ENCODE measurements at regions of chr2 and their contacts with region 1.

Region 1: DNA sequence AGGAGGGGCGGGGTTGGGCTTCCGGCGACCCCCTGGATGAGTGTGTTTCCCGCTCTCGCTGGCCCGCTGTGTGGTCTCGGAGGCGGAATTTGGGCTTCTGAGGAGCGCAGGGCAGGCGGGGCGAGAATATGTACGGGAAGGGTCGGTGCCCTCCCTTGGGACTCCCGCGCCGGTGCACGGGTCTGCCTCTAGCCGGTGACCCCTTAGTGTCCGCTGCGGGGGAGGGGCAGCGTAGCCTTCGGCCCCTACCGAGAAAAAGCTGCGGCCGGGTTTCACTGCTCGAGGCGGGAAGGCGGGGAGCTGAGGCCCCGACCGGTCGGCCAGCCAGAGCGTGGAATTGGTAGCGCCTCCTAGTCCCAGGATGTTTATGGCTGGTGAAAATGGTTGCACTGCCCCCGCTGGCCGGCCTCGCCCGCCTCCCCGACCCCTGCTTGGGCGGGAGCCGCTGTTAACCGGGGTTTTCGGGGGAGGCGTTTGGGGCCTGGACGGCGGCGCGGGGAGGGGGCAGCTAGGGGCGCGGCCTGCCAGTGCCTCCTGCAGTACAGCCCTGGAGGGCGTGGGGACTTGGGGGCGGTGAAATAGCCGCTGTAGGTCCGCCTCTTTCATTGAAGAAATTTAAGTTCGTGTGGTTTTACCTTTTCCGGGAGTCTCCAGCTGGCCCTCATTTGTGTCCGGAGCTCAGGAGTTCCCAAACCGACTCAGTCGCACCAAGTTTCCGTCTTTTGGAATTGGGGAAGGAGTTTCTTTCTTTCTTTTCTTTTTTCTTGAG is at the start of gene UGP2:
- DNase-seq: peak; percentile 93
- ATAC-seq: peak; percentile 70
- H3K4me3 Mint-ChIP-seq: peak within 1 kb of the TSS; percentile 100
- H3K27ac Mint-ChIP-seq: peak within 1 kb of the TSS; percentile 97
- H3K4me1 Mint-ChIP-seq: peaks cover 43% of the 10 kb centered on the region
- H3K27me3 Mint-ChIP-seq: no peaks in the 10 kb centered on the region
- CTCF ChIP-seq: no peak
- total RNA-seq, gene UGP2: 543 to 626 TPM (median 606 TPM) in 3 replicates

Region 2: DNA sequence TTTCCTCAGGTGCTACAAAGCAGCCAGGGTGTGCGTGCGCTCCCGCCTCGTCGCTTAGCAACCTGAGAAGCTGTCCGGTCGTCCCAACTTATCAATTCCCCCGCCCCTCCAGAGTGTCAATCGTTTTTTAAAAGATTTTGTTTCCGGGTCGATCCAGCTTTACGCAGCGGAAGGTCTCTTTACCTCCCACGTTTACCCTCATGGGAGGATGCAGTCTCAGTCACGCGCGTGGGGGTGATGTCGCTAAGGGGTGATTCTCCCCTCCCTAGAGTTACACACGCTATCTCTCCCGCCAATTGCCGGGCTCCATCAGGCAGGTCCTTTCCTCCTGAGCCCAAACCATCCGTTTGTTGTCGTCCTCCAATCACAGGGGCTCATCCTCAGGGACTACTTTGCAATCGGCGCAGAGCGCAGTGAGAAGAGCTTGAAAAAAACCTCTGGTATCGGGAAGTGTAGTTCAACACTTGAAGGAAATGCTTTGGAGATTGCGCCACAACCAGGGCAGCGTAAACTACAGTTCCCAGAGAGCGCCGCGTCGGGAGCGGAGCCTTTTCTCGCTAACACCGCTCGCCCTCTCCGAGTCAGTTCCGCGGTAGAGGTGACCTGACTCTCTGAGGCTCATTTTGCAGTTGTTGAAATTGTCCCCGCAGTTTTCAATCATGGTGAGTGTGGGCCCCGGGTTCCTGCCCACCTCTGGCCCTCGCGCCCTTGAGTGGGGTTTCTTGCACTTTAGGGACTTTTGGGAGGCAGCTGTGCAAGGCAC is 252.9 kb before region 1 on chr2 and contains the starts of genes MDH1 and WDPCP:
- CTCF ChIA-PET with region 1: no interaction called
- POLR2A ChIA-PET with region 1: interaction called, 14 read pairs
- DNase-seq: peak; percentile 93
- ATAC-seq: peak; percentile 91
- H3K4me3 Mint-ChIP-seq: peak within 1 kb of the TSS; percentile 99
- H3K27ac Mint-ChIP-seq: peak within 1 kb of the TSS; percentile 97
- H3K4me1 Mint-ChIP-seq: peaks cover 31% of the 10 kb centered on the region
- H3K27me3 Mint-ChIP-seq: no peaks in the 10 kb centered on the region
- CTCF ChIP-seq: no peak
- total RNA-seq, gene MDH1: 255 to 268 TPM (median 259 TPM) in 3 replicates
- total RNA-seq, gene WDPCP: 7.3 to 11.6 TPM (median 10.9 TPM) in 3 replicates

Region 3: DNA sequence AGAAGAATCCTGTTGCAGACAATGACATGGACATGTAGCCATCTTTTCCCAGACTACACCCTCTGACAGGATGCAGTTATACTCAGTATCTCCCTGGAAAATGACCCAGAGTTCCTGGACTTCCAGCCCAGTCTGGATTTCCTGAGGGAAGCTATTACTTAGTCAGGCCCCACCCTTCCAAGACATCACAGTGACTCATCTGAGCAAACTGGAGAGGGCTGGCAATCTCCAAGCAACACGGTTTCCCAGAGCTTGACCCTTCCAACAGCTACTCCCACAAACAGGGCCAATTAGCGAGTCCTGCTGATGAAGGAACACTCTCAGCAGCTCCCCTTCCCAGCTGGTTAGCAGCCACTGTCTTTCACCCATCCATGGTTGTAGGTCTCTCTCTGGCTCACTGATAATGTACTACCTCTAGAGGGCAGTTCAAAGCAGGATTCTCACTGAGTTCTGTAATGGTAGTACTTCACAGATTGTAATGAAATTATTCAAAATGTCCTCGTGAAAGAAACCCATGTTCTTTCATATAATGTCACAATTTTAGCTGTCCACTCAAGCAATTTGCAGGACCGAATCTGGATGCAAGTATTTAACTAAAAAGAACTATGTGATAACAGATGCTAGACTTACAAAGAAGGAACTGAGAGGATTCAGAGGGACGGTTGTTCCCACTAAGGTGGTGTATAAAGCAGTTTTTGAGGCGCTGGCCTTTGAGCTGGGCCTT is 142.5 kb before region 1 on chr2:
- CTCF ChIA-PET with region 1: interaction called, 17 read pairs
- POLR2A ChIA-PET with region 1: interaction called, 11 read pairs
- DNase-seq: peak; percentile 52
- ATAC-seq: peak; percentile 99
- H3K4me3 Mint-ChIP-seq: no peak overlapping the region
- H3K27ac Mint-ChIP-seq: peak overlapping the region; percentile 8; the same call in 1 of the 2 replicates
- H3K4me1 Mint-ChIP-seq: peaks cover 19% of the 10 kb centered on the region
- H3K27me3 Mint-ChIP-seq: no peaks in the 10 kb centered on the region
- CTCF ChIP-seq: no peak